Caco-2 (cell line): ENCODE measurements at regions of chr19 and their contacts with region 1.

Region 1: DNA sequence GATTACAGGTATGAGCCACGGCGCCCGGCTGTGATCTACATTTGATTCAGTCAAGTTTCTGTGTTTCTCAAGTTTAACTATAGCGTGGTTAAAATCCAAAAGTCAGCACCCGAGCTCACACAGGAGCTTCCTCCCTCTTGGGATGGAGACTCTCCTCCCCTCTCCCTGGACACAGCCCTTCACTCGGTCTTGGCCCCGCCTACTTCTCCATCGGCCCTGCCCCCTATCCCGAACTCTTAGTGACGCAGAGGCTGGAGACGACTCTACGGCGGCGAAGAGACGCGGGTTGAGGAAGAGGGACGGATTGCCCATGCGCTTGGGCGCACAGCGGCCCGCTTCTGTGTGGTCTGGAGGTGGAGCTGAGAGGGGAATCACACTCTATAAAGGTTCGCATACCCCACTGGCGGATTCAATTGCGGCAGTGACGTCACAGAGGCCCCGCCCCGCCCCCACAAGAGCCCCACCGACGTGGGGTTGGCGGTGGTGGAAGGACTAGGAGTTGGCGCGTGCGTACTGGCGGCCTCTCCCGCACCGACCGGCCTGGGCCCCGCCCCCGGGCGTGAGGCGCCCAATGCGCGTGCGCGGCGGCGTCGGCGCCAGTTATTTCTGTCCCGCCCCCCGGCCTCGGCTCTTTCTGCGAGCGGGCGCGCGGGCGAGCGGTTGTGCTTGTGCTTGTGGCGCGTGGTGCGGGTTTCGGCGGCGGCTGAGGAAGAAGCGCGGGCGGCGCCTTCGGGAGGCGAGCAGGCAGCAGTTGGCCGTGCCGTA is at the start of gene TRIM28:
- DNase-seq: peak; percentile 99
- H3K4me3 ChIP-seq: peak within 1 kb of the TSS; percentile 87
- H3K4me3 Mint-ChIP-seq: peak within 1 kb of the TSS; percentile 92
- H3K27ac Mint-ChIP-seq: peak within 1 kb of the TSS; percentile 97
- H3K4me1 ChIP-seq: peaks cover 11% of the 10 kb centered on the region
- H3K4me1 Mint-ChIP-seq: peaks cover 14% of the 10 kb centered on the region
- H3K27me3 ChIP-seq: no peaks in the 10 kb centered on the region
- H3K27me3 Mint-ChIP-seq: peaks cover 9% of the 10 kb centered on the region
- CTCF ChIP-seq: no peak
- total RNA-seq, gene TRIM28: 837 and 863 TPM in 2 replicates

Region 2: GRCh38 chr19:58355908-58356765 is 187.9 kb before region 1 on chr19:
- CTCF ChIA-PET with region 1: no interaction called
- POLR2A ChIA-PET with region 1: no interaction called
- intact Hi-C with region 1: no loop called
- DNase-seq: no peak
- H3K4me3 ChIP-seq: no peak overlapping the region
- H3K4me3 Mint-ChIP-seq: no peak overlapping the region
- H3K27ac Mint-ChIP-seq: no peak overlapping the region
- H3K4me1 ChIP-seq: no peaks in the 10 kb centered on the region
- H3K4me1 Mint-ChIP-seq: no peaks in the 10 kb centered on the region
- H3K27me3 ChIP-seq: no peaks in the 10 kb centered on the region
- H3K27me3 Mint-ChIP-seq: no peaks in the 10 kb centered on the region
- CTCF ChIP-seq: no peak

Region 3: GRCh38 chr19:58374200-58374599 is 169.8 kb before region 1 on chr19:
- CTCF ChIA-PET with region 1: no interaction called
- POLR2A ChIA-PET with region 1: no interaction called
- intact Hi-C with region 1: no loop called
- DNase-seq: no peak
- H3K4me3 ChIP-seq: no peak overlapping the region
- H3K4me3 Mint-ChIP-seq: no peak overlapping the region
- H3K27ac Mint-ChIP-seq: no peak overlapping the region
- H3K4me1 ChIP-seq: no peaks in the 10 kb centered on the region
- H3K4me1 Mint-ChIP-seq: no peaks in the 10 kb centered on the region
- H3K27me3 ChIP-seq: no peaks in the 10 kb centered on the region
- H3K27me3 Mint-ChIP-seq: no peaks in the 10 kb centered on the region
- CTCF ChIP-seq: no peak

Region 4: DNA sequence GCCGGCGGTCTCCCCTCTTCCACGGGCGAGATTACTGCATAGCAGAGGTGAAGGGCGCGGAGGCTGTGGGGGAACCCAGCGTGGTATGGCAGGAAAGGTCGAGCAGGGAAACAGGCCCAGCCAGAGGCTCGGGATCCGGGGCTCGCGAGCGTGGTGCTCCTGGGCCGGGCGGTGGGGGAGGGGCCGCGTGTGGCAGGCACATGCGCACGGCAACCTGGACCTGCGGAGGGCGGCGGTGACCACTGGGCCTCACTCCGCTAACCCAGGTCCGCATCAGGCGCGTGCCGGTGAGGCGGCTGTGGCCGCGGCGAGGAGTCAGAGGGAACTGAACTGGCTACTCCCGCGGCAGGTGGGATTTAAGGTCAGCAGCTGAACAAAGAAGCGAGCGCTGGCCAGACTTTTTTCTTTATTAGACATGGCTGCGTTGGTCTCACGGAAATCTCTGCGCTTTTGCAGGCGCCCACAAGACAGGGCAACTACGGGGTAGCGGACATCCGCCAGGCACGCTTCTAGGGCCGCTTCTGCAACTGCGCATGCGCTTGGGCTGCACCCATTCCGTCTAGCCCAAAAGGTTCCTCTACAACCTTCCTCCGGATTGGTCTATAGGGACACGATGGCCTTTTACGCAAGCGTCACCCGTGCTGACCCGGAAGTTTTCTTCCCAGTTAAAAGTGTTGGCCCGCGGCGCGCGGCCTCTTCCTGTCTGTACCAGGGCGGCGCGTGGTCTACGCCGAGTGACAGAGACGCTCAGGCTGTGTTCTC is 157.3 kb before region 1 on chr19 and contains the start of gene RPS5:
- CTCF ChIA-PET with region 1: no interaction called
- POLR2A ChIA-PET with region 1: no interaction called
- intact Hi-C with region 1: loop called (anchors 1 kb)
- DNase-seq: peak; percentile 97 to 98
- H3K4me3 ChIP-seq: peak within 1 kb of the TSS; percentile 79
- H3K4me3 Mint-ChIP-seq: peak within 1 kb of the TSS; percentile 85
- H3K27ac Mint-ChIP-seq: peak within 1 kb of the TSS; percentile 96
- H3K4me1 ChIP-seq: peaks cover 18% of the 10 kb centered on the region
- H3K4me1 Mint-ChIP-seq: peaks cover 12% of the 10 kb centered on the region
- H3K27me3 ChIP-seq: no peaks in the 10 kb centered on the region
- H3K27me3 Mint-ChIP-seq: no peaks in the 10 kb centered on the region
- CTCF ChIP-seq: no peak
- total RNA-seq, gene RPS5: 1,436 and 1,611 TPM in 2 replicates

Region 5: GRCh38 chr19:58499021-58499927 is 44.7 kb before region 1 on chr19:
- CTCF ChIA-PET with region 1: no interaction called
- POLR2A ChIA-PET with region 1: interaction called, 10 read pairs
- intact Hi-C with region 1: no loop called
- DNase-seq: peak; percentile 100
- H3K4me3 ChIP-seq: peak overlapping the region; percentile 69
- H3K4me3 Mint-ChIP-seq: peak overlapping the region; percentile 78
- H3K27ac Mint-ChIP-seq: peak overlapping the region; percentile 73
- H3K4me1 ChIP-seq: peaks cover 8% of the 10 kb centered on the region; the same call in 1 of the 2 replicates
- H3K4me1 Mint-ChIP-seq: peaks cover 7% of the 10 kb centered on the region
- H3K27me3 ChIP-seq: no peaks in the 10 kb centered on the region
- H3K27me3 Mint-ChIP-seq: no peaks in the 10 kb centered on the region
- CTCF ChIP-seq: peak; percentile 39 to 68

Region 6: DNA sequence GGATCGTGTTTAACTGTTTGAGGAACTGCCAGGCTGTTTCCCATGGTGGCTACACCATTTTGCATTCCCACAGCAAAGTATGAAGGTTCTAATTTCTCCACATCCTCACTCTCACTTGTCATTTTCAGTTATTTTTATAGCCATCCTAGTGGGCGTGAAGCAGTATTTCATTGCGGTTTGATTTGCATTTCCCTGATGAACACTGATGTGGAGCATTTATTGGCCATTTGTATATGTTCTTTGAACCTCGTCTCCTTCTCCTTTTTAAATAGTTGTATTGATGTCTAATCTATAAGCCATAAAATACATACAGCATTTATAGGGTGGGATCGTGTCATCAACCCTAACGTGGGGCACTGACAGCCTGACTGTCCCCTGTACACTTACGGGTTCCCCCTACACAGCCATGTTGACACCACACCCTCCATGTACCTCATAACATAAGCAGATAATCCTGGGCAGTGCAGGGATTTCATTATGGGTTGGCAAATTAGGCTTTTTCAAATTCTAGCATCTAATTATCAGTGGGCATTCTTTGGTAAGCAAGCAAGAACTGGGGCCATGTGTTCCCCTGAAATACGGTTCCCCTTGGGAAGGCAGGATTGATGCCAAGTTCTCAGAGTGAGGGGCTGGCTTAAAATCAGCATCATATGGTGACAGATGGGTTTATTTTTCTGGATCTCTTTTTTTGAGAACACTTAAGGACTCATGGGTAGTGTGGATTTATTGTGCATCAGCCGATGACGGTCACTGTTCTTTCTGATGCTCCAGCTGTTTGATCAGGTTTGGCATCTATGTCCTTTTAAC is 12.8 kb before region 1 on chr19:
- CTCF ChIA-PET with region 1: no interaction called
- POLR2A ChIA-PET with region 1: no interaction called
- intact Hi-C with region 1: no loop called
- DNase-seq: no peak
- H3K4me3 ChIP-seq: no peak overlapping the region
- H3K4me3 Mint-ChIP-seq: no peak overlapping the region
- H3K27ac Mint-ChIP-seq: no peak overlapping the region
- H3K4me1 ChIP-seq: no peaks in the 10 kb centered on the region
- H3K4me1 Mint-ChIP-seq: no peaks in the 10 kb centered on the region
- H3K27me3 ChIP-seq: no peaks in the 10 kb centered on the region
- H3K27me3 Mint-ChIP-seq: peaks cover 6% of the 10 kb centered on the region
- CTCF ChIP-seq: no peak

Region 7: GRCh38 chr19:58558623-58559274 is 14.7 kb after region 1 on chr19:
- CTCF ChIA-PET with region 1: interaction called, 6 read pairs
- POLR2A ChIA-PET with region 1: interaction called, 40 read pairs
- intact Hi-C with region 1: loop called (anchors 1 kb)
- DNase-seq: peak; percentile 99
- H3K4me3 ChIP-seq: peak overlapping the region; percentile 69
- H3K4me3 Mint-ChIP-seq: peak overlapping the region; percentile 99
- H3K27ac Mint-ChIP-seq: peak overlapping the region; percentile 98
- H3K4me1 ChIP-seq: peaks cover 15% of the 10 kb centered on the region; the same call in 1 of the 2 replicates
- H3K4me1 Mint-ChIP-seq: peaks cover 31% of the 10 kb centered on the region
- H3K27me3 ChIP-seq: no peaks in the 10 kb centered on the region
- H3K27me3 Mint-ChIP-seq: no peaks in the 10 kb centered on the region
- CTCF ChIP-seq: no peak

Region 8: GRCh38 chr19:58572818-58573657 is 29.0 kb after region 1 on chr19 and contains the start of gene MZF1:
- CTCF ChIA-PET with region 1: interaction called, 3 read pairs
- POLR2A ChIA-PET with region 1: interaction called, 21 read pairs
- intact Hi-C with region 1: loop called (anchors 1 kb)
- DNase-seq: peak; percentile 99 to 100
- H3K4me3 ChIP-seq: peak within 1 kb of the TSS; percentile 67
- H3K4me3 Mint-ChIP-seq: peak within 1 kb of the TSS; percentile 87
- H3K27ac Mint-ChIP-seq: peak within 1 kb of the TSS; percentile 98
- H3K4me1 ChIP-seq: no peaks in the 10 kb centered on the region
- H3K4me1 Mint-ChIP-seq: peaks cover 17% of the 10 kb centered on the region
- H3K27me3 ChIP-seq: no peaks in the 10 kb centered on the region
- H3K27me3 Mint-ChIP-seq: no peaks in the 10 kb centered on the region
- CTCF ChIP-seq: peak in 1 of 2 experiments; percentile 6
- total RNA-seq, gene MZF1: 20.4 and 25.6 TPM in 2 replicates